ENCODE measurements at regions of chr2 and their contacts with region 1.

Region 1: DNA sequence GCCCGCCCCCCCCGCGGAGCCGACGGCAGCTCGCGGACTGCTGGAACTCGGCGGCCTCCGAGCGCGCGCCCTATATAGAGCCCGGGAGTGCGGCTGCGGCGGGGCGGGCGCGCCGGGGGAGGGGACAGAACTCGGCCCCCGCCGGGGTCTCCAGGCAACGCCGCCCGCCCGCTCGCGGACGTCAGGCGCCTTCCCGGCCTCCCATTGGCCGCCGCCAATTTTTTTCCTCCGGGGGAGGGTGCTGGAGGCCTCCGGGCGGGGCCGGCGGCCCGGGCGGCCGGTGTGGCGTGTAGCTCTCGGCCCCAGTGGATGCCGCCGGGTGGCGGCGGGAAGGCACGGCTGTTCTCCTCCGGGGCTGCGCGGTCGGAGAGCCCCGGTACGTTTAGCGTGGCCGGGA is at the start of gene ZFP36L2:
- DNase-seq: peak; percentile 99
- H3K4me3 Mint-ChIP-seq: peak within 1 kb of the TSS; percentile 99
- H3K27ac Mint-ChIP-seq: peak within 1 kb of the TSS; percentile 97
- H3K4me1 Mint-ChIP-seq: peaks cover 35% of the 10 kb centered on the region
- H3K27me3 Mint-ChIP-seq: peaks cover 2% of the 10 kb centered on the region
- total RNA-seq, gene ZFP36L2: 92.8 and 93.1 TPM in 2 replicates

Region 2: DNA sequence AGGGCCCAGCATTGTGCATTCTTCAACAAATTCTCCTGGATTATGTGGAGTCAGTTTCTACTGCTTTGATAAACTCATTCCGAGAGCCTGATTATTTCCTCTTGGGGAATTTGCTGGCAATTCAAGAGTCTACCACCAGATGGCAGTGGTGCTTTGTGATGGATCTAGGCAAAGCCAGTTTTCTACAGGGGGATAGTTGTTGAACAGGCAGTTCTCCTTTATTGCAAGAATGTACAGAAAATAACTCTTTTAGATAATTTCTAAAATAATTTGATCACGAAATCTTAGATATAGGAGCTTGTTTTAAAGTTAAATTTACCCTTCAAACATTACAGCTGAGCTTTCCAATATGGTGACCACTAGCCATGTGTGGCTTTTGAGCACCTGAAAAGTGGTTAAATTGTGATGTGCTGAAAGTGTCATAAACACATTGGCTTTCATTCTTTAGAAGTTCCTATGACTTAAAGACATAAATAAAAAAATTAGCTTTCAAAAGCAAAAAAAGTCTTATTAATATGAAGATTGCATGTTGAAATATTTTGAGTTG is 367.5 kb before region 1 on chr2:
- intact Hi-C with region 1: loop called (anchors 1 kb)
- DNase-seq: peak; percentile 91
- H3K4me3 Mint-ChIP-seq: no peak overlapping the region
- H3K27ac Mint-ChIP-seq: no peak overlapping the region
- H3K4me1 Mint-ChIP-seq: peaks cover 2% of the 10 kb centered on the region
- H3K27me3 Mint-ChIP-seq: no peaks in the 10 kb centered on the region

Region 3: GRCh38 chr2:43024515-43025011 is 202.0 kb before region 1 on chr2:
- intact Hi-C with region 1: loop called (anchors 1 kb)
- DNase-seq: peak; percentile 72
- H3K4me3 Mint-ChIP-seq: no peak overlapping the region
- H3K27ac Mint-ChIP-seq: no peak overlapping the region
- H3K4me1 Mint-ChIP-seq: peaks cover 7% of the 10 kb centered on the region
- H3K27me3 Mint-ChIP-seq: no peaks in the 10 kb centered on the region

Region 4: DNA sequence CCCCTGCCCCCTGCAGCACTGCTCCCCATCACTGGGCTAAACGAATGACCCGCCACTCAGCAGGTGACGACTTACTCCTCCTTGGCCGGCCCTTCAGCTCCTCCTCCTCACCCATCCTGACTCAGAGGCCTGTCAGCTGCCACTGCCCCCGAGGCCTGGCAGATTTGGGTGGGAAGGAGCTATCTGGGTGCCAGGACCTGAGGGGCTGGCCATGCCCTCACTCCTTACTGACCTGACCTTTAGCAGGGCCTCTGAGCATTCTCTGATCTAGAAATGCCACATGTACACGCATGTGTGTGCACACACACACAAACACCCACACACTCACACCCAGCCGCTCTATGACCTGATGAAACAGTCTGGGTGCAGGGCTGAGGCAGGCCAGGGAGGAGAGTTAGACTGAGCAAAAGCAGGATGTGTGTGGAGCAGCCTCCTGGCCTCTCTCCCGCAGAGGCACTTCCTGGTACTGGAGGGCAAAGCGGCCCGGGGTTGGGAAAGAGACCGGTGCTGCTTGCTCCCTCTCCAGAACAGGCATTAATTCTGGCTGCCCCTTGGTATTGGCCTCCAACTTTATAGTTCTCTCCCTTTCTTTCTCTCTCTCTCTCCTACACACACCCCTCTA is 68.2 kb before region 1 on chr2:
- intact Hi-C with region 1: loop called (anchors 1 kb)
- DNase-seq: peak; percentile 89
- H3K4me3 Mint-ChIP-seq: peak overlapping the region; percentile 78
- H3K27ac Mint-ChIP-seq: peak overlapping the region; percentile 98
- H3K4me1 Mint-ChIP-seq: peaks cover 56% of the 10 kb centered on the region
- H3K27me3 Mint-ChIP-seq: no peaks in the 10 kb centered on the region

Region 5: DNA sequence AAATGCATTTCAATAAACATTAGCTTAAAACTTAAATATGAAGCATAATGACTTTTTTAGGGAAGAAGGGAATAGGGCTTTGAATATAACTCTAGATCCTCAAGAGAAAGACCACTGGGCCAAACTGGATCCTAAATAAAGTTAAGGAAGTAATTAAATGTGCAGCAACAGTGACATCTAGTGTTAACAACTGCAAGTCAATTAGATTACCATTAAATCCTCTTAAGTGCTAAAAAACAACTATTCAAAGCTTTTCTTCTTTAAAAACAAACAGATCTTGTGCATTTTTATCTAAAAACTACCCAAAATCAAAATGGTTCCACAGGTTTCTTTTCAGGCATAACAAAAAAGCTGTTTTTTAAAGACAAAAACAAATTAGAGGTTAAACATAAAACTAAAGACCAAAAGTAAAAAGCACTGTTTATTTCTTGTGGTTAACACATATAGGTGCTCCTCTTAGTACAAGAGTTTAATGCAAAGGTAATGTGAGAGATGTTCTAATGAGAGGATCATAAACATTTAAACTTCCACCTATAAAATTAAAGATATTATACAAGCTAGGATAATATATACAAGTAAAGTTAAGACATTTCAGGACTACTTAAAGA is 257.9 kb after region 1 on chr2:
- intact Hi-C with region 1: loop called (anchors 2 kb)
- DNase-seq: peak; percentile 65
- H3K4me3 Mint-ChIP-seq: no peak overlapping the region
- H3K27ac Mint-ChIP-seq: no peak overlapping the region
- H3K4me1 Mint-ChIP-seq: peaks cover 8% of the 10 kb centered on the region
- H3K27me3 Mint-ChIP-seq: no peaks in the 10 kb centered on the region

Region 6: DNA sequence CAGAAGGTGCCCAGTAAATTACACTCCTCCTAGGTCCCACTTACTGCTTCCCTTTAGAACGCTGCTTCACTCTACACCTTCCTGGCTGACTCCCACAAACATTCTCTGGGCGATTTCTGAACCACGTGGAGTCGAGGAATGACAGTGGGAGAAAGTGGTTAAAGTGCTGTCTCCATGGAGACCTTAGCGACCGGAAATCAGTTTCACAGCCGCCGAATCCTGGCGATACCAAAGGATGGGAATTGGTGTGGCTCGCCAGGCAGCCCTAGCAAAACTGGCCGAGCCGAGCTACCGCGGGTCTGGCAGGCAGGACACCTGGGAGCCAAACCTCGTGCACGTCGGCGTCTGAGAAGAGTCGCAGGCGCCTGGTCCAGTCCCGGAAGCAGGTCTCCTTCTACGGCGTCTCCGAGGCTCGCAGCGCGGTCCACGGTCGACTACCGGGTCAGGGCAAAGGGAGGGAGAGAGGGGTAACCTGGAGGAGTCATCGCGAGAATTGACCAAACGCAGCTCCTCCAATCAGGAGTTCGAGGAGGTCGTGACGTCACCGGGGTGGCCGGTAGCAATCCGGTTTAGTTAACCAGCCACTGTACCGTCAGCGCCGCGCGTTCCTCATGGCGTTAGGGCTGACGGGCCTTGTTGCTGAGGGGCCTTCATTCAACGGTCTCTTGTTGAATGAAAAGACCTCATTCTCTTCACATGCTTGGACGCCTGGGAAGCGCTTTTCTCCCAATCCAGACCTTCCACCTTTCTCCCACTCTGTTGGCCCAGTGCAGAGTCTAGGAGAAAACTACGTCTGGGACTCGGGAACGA is 369.3 kb after region 1 on chr2 and contains the start of gene THADA:
- intact Hi-C with region 1: loop called (anchors 5 kb)
- DNase-seq: peak; percentile 99
- H3K4me3 Mint-ChIP-seq: peak within 1 kb of the TSS; percentile 98
- H3K27ac Mint-ChIP-seq: peak within 1 kb of the TSS; percentile 99
- H3K4me1 Mint-ChIP-seq: peaks cover 28% of the 10 kb centered on the region
- H3K27me3 Mint-ChIP-seq: no peaks in the 10 kb centered on the region
- total RNA-seq, gene THADA: 41.6 and 55.4 TPM in 2 replicates

Measured in activated CD4-positive, alpha-beta T cell treated with anti-CD3 and anti-CD28 coated beads, Interleukin-2, amount 10 ng/mL, durations not matched to agents 24 days and 14 days (primary cell).